Sciatic nerve (tissue), 2 donors: ENCODE measurements at regions of chr11 and their contacts with region 1.

Region 1: GRCh38 chr11:64448599-64449556 is 89.9 kb downstream of the RPS6KA4 start:
- DNase-seq: peak; percentile 91
- ATAC-seq: peak; percentile 97

Region 2: DNA sequence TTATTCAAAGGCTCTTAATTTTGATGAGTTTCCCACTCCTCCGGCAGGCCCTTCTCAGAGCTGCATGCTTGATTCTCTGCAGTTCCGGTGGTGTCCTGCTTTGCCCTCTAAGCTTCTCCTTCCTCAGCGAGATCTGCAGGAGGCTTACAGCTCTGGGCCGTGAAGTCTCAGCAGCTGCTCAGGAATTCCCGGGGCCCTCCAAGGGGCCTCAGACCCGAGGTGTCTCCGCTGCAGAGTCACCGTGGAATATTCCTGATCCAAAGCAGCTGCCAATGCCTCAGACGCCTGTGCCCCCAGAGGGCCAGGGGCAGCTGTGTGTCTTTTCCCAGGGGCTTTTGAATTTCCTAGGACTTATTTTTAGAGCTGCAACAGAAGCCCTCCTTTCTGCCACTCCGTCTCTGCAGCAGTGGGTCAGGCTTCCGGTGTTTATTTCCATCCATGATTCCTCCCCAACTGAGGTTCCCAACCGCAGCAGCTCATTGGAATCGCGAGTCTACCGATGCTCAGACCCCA is 52.7 kb before region 1 on chr11:
- intact Hi-C with region 1: no loop called
- DNase-seq: no peak
- ATAC-seq: peak; percentile 39

Region 3: DNA sequence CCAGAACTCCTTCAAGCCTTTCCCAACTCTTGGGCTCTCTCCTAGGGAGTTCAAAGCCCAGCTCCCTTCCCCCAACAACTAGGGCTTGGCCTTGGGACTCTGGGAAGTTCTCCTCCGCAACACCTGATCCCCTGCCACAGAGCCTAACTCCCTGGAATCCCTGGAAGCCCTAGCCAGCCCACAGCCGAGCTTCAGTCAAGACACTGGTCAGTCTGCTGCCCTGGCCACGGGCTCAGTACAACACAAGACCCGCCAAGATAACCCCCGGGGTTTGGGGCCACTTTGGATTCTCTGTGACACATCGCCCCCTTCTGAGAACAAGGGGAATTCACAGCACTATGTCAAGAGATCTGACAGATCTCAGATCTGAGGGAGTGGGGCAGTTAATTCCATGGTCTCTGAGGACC is 200.4 kb after region 1 on chr11:
- intact Hi-C with region 1: loop called (anchors 10 kb)
- DNase-seq: no peak
- ATAC-seq: no peak

Region 4: GRCh38 chr11:64996710-64997380 is 548.0 kb after region 1 on chr11 and contains the start of gene BATF2:
- intact Hi-C with region 1: no loop called
- DNase-seq: peak; percentile 78
- ATAC-seq: peak; percentile 83
- total RNA-seq, gene BATF2: 2.9 TPM